ENCODE measurements at regions of chr10 and their contacts with region 1.

Region 1: DNA sequence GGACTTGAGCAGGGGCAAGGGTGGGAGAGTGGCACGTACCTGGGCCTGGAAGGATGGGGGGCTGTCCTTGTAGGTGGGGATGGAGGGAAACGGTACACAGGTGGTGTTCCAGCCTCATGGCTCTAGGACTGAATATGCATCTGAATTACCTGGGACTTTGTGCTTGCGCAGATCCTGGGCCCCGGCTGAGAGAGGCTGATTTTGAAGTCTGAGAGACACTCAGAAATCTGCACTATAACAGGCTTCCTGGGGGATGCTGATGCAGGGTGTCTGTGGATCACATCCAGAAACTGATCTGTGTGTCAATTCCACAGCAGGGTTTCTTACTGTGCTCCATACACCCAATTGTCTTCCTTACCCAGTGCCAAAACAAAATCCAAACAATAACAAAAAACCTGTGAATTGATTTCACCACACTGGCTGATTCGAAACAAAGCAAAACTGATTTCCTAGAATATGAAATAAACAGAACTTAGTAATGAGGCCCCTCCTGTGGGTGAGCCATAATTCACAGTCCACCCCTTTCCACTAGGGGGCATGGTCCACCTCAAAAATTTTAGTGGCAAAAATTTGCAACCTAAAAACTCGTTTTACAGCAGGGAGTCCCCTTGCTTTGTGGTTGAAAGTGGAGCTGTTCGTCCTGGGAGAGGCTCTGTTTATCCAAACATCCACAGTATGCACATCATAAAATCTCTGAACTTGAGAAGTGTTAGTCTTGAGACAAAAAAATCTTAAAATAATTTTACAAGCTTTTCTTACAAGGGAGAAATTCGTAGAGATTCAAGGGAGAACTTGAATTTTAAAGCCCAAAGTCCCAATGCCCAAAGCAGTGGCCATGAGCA is 32.0 kb upstream of the PLEKHA1 start:
- DNase-seq: peak; percentile 46
- H3K4me3 ChIP-seq: no peak overlapping the region
- H3K27ac ChIP-seq: no peak overlapping the region
- H3K4me1 ChIP-seq: peaks cover 12% of the 10 kb centered on the region
- H3K27me3 ChIP-seq: no peaks in the 10 kb centered on the region
- CTCF ChIP-seq: peak; percentile 76 to 79

Region 2: GRCh38 chr10:122279725-122280141 is 62.8 kb before region 1 on chr10:
- CTCF ChIA-PET with region 1: interaction called, 3 read pairs
- dilution Hi-C with region 1: no loop called
- in situ Hi-C with region 1: no loop called
- intact Hi-C with region 1: loop called (anchors 1 kb)
- DNase-seq: peak; percentile 46
- H3K4me3 ChIP-seq: no peak overlapping the region
- H3K27ac ChIP-seq: no peak overlapping the region
- H3K4me1 ChIP-seq: peaks cover 16% of the 10 kb centered on the region
- H3K27me3 ChIP-seq: no peaks in the 10 kb centered on the region
- CTCF ChIP-seq: peak; percentile 83 to 93

Region 3: GRCh38 chr10:122374237-122374869 is 31.8 kb after region 1 on chr10 and contains the start of gene PLEKHA1:
- CTCF ChIA-PET with region 1: interaction called, 4 read pairs
- dilution Hi-C with region 1: no loop called
- in situ Hi-C with region 1: no loop called
- intact Hi-C with region 1: loop called (anchors 1 kb)
- DNase-seq: peak; percentile 97
- H3K4me3 ChIP-seq: peak within 1 kb of the TSS; percentile 81 to 98 (median 97)
- H3K27ac ChIP-seq: peak within 1 kb of the TSS; percentile 90
- H3K4me1 ChIP-seq: peaks cover 16% of the 10 kb centered on the region
- H3K27me3 ChIP-seq: no peaks in the 10 kb centered on the region
- CTCF ChIP-seq: no peak
- total RNA-seq, gene PLEKHA1: 52.4 to 56.5 TPM

Region 4: GRCh38 chr10:122490786-122491680 is 148.5 kb after region 1 on chr10:
- CTCF ChIA-PET with region 1: no interaction called
- dilution Hi-C with region 1: no loop called
- in situ Hi-C with region 1: no loop called
- intact Hi-C with region 1: no loop called
- DNase-seq: peak; percentile 88
- H3K4me3 ChIP-seq: no peak overlapping the region
- H3K27ac ChIP-seq: peak overlapping the region; percentile 62
- H3K4me1 ChIP-seq: peaks cover 57% of the 10 kb centered on the region
- H3K27me3 ChIP-seq: no peaks in the 10 kb centered on the region
- CTCF ChIP-seq: no peak

Region 5: DNA sequence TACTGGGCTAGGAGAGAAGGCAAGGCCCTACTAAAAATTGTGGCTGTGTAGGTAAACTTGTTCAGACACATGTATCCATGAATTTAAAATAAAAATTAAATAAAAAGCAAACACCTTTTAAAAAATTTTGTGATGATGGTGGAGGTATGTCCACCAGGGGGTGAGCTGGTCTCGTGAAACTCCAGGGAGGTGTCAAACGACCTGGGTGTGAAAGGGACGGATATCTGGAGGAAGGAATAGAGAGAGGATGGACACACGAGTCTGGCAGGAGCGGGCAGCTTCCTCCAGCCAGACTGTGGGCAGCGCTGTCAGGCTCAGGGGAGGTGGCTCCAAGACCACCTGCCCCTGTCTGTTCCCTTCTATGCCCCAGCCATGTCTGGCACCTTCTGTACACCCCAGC is 183.3 kb after region 1 on chr10:
- CTCF ChIA-PET with region 1: no interaction called
- dilution Hi-C with region 1: no loop called
- in situ Hi-C with region 1: no loop called
- intact Hi-C with region 1: no loop called
- DNase-seq: no peak
- H3K4me3 ChIP-seq: no peak overlapping the region
- H3K27ac ChIP-seq: no peak overlapping the region
- H3K4me1 ChIP-seq: peaks cover 4% of the 10 kb centered on the region
- H3K27me3 ChIP-seq: no peaks in the 10 kb centered on the region
- CTCF ChIP-seq: peak; percentile 32 to 48

Region 6: GRCh38 chr10:122648599-122649428 is 306.3 kb after region 1 on chr10:
- CTCF ChIA-PET with region 1: interaction called, 3 read pairs
- dilution Hi-C with region 1: no loop called
- in situ Hi-C with region 1: no loop called
- intact Hi-C with region 1: loop called (anchors 5 kb)
- DNase-seq: peak; percentile 16
- H3K4me3 ChIP-seq: no peak overlapping the region
- H3K27ac ChIP-seq: no peak overlapping the region
- H3K4me1 ChIP-seq: no peaks in the 10 kb centered on the region
- H3K27me3 ChIP-seq: no peaks in the 10 kb centered on the region
- CTCF ChIP-seq: peak; percentile 87

Region 7: DNA sequence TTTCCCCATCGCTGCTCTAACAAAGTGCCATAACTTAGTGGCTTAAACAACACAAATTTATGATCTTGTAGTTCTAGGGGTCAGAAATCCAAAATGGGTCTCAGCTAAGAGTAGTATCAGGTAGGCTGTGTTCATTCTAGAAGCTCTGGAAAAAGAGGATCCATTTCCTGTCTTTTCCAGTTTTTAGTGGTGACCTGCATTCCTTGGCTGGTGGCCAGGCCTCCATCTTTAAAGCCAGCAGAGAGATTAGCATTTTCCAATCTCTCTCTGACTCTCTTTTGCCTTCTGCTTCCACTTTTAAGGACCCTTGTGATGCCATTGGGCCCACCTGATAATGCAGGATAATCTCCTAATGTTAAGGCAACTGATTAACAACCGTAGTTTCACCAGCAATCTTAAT is 398.1 kb after region 1 on chr10:
- CTCF ChIA-PET with region 1: interaction called, 18 read pairs
- dilution Hi-C with region 1: no loop called
- in situ Hi-C with region 1: no loop called
- intact Hi-C with region 1: no loop called
- DNase-seq: no peak
- H3K4me3 ChIP-seq: no peak overlapping the region
- H3K27ac ChIP-seq: no peak overlapping the region
- H3K4me1 ChIP-seq: peaks cover 1% of the 10 kb centered on the region
- H3K27me3 ChIP-seq: peaks cover 10% of the 10 kb centered on the region
- CTCF ChIP-seq: no peak

Measured in mammary epithelial cell (primary cell).